Gastrocnemius medialis (tissue), 4 donors: ENCODE measurements at regions of chr1 and their contacts with region 1.

Region 1: GRCh38 chr1:89804642-89805237 is 16.1 kb upstream of the LRRC8D start:
- DNase-seq: peak; percentile 67 to 78
- ATAC-seq: peak; percentile 96 to 98
- H3K4me3 ChIP-seq: no peak overlapping the region
- H3K27ac ChIP-seq: no peak overlapping the region
- H3K4me1 ChIP-seq: no peaks in the 10 kb centered on the region
- H3K27me3 ChIP-seq: no peaks in the 10 kb centered on the region
- CTCF ChIP-seq: peak; percentile 75 to 93 (median 82)
- POLR2A ChIP-seq: no peak

Region 2: GRCh38 chr1:89953072-89953626 is 148.4 kb after region 1 on chr1:
- in situ Hi-C with region 1: loop called in 1 of 4 experiments (anchors 10 kb)
- intact Hi-C with region 1: loop called (anchors 1 kb)
- DNase-seq: no peak
- ATAC-seq: peak; percentile 54 to 66
- H3K4me3 ChIP-seq: no peak overlapping the region
- H3K27ac ChIP-seq: no peak overlapping the region
- H3K4me1 ChIP-seq: no peaks in the 10 kb centered on the region
- H3K27me3 ChIP-seq: no peaks in the 10 kb centered on the region
- CTCF ChIP-seq: peak in 4 of 5 experiments; percentile 11 to 51 (median 38)
- POLR2A ChIP-seq: no peak

Region 3: DNA sequence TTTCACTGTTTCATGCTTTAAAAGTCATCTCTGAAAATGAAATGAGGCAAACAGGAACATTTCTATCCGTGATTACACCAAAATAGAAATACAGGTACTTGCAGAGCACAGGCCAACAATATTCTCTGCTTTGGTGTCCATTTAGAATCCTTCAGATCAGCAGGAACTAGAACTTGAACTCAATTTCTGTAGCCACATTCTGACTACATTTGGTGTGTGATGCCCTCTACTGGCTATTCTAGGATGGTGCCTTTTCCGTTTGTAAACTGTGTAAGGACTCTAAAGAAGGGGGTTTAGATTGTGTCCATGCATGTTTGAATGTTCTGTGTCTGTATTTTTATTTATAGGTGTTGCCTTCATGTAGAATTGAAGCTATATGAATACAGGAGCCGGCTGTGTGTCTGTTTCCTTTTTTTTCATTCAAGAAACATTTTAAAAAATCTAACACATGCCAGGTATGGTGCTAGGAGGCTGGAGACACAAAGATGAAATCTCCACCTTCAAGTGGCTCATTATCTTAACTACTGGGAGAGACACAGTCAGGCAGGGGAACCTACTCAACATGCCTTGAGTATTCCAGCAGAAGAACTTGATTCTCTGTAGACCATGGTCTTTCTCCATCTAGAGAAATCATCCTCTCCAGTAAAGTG is 182.6 kb after region 1 on chr1:
- in situ Hi-C with region 1: loop called (anchors 5 to 10 kb)
- intact Hi-C with region 1: loop called (anchors 1 kb)
- DNase-seq: peak in 1 of 2 donors; percentile 22
- ATAC-seq: peak; percentile 93 to 95
- H3K4me3 ChIP-seq: no peak overlapping the region
- H3K27ac ChIP-seq: no peak overlapping the region
- H3K4me1 ChIP-seq: peaks cover 0 to 3% of the 10 kb centered on the region in 2 donors
- H3K27me3 ChIP-seq: no peaks in the 10 kb centered on the region
- CTCF ChIP-seq: peak; percentile 73 to 88 (median 79)
- POLR2A ChIP-seq: no peak